ENCODE measurements at regions of chr15 and their contacts with region 1.

Region 1: DNA sequence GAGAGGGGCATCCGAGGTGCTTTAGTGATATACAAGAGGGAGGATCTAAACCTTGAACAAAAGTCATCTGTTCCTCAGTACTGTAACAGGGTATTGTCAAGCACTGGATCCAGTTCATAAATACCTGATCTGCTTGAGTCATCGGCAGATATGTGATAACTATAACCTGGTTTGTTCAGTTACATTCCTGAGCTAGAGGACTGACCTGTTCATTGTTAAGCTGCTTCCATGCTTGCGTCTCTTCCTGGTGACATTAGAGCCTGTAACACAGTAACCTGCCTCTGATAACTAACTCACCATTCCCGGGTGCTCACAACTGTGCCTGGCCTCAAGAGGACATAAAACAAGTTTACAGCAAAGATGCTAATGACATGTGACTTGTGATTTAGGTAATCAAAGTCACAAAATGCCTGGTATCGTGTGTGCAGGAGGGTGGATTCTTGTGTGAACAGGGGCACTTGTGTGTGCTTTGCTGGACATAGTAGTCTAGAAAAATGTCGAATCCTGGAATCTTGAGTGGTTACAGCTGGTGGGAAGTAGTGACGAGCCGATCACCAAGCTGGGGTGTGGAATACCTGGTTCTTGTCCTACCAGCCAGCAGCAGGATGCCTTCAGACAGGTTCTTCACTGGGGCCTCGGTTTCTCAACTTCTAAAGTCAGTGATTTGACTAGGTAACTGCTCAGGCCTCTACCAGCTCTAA is 30.9 kb upstream of the POLR2M start:
- DNase-seq: no peak
- H3K4me3 ChIP-seq: no peak overlapping the region
- H3K27ac ChIP-seq: no peak overlapping the region
- H3K4me1 ChIP-seq: peaks cover 0 to 20% (median 4%) of the 10 kb centered on the region in 4 donors
- H3K27me3 ChIP-seq: no peaks in the 10 kb centered on the region
- CTCF ChIP-seq: no peak

Region 2: DNA sequence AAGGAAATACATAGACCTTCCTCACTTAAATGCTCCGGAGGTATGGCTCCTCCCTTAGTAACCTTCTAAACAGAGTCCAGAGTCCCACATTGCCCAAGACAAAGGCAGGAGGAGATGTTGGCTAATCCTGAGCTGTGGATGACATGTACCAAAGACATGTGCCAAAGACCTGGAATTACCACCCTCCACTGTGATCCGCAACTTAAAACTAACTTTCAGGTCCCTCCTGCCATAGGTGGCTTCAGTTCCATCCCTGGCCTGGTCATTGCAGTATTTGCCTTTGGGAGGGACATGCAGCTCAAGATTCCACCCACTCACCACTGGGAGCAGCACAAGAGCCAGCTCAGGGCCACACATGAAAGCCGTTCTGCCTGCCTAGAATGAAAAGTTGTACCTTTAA is 55.9 kb before region 1 on chr15:
- intact Hi-C with region 1: no loop called
- DNase-seq: no peak
- H3K4me3 ChIP-seq: no peak overlapping the region
- H3K27ac ChIP-seq: peak overlapping the region in 1 of 2 donors; percentile 10
- H3K4me1 ChIP-seq: peaks cover 0 to 13% (median 3%) of the 10 kb centered on the region in 4 donors
- H3K27me3 ChIP-seq: no peaks in the 10 kb centered on the region
- CTCF ChIP-seq: no peak

Region 3: DNA sequence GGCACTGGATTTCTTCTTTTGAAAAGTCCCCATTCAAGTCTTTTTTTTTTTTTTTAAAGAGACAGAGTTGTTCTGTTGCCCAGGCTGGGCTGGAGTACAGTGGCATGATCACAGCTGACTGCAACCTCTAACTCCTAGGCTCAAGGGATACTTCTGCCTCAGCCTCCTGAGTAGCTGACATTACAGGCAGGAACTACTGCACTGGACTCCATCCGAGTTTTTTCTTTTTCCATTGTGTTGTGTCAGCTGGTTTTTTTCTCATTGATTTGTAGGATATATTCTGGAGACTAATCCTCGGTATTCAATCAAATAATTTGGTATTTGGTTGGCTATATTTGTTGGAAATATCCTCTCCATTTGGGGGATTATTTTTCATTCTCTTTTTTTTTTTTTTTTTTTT is 42.7 kb after region 1 on chr15:
- intact Hi-C with region 1: loop called (anchors 5 kb)
- DNase-seq: no peak
- H3K4me3 ChIP-seq: no peak overlapping the region
- H3K27ac ChIP-seq: no peak overlapping the region
- H3K4me1 ChIP-seq: peaks cover 0 to 5% (median 2%) of the 10 kb centered on the region in 4 donors
- H3K27me3 ChIP-seq: no peaks in the 10 kb centered on the region
- CTCF ChIP-seq: no peak

Region 4: DNA sequence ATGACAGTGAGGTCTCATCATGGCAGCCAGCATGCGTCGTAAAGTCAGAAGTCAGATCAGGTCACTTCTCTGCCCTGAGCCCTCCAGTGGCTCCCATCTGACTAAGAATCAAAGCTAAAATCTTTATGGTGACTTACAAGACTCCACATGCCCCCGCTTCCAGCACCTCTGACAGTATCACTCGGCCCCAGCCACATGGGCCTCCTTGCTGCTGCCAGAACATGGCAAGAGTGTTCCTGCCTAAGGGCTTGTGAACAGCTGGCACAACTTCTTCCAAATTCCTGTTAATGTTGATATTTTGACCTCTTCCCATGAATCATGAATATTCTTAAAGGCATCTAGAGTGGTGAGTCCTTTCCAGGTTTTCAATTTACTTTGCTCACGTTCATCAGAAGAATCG is 51.4 kb after region 1 on chr15:
- intact Hi-C with region 1: loop called (anchors 2 kb)
- DNase-seq: no peak
- H3K4me3 ChIP-seq: no peak overlapping the region
- H3K27ac ChIP-seq: no peak overlapping the region
- H3K4me1 ChIP-seq: peaks cover 0 to 6% (median 2%) of the 10 kb centered on the region in 4 donors
- H3K27me3 ChIP-seq: no peaks in the 10 kb centered on the region
- CTCF ChIP-seq: no peak

Measured in tibial artery (tissue), 4 donors.